Activated CD4-positive, alpha-beta T cell treated with anti-CD3 and anti-CD28 coated beads, Interleukin-2, amount 10 ng/mL, durations not matched to agents 24 days and 14 days (primary cell): ENCODE measurements at regions of chr2 and their contacts with region 1.

Region 1: DNA sequence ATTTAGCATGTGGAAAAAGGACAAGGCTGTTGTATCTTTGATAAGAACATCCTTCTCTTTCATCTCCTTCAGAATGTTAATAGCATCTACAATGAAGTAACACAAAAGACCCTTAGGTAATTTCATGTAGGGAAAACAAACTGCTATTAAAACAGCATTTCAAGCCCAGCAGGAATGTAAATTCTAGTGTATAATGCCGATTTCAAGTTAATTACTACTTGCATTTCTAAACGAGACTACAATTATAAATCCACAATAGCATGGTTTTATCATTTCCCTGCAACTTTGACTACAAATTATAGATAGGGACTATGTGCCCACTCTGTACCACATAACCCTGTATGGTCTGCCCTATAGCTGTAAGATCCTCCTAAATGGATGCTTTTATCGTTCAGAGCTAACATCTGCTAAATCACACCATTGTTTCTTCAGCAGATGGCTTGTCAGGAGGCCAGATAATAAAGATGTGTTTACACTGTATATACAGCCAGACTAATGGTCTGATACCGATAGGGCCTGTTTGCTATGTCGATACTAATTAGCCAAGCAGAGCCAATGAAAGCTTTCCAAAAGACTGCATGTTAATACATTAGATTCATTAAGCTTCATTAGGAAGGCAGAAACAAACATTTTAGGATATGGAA is 51.9 kb downstream of the LRPPRC start:
- DNase-seq: no peak
- H3K4me3 Mint-ChIP-seq: no peak overlapping the region
- H3K27ac Mint-ChIP-seq: no peak overlapping the region
- H3K4me1 Mint-ChIP-seq: no peaks in the 10 kb centered on the region
- H3K27me3 Mint-ChIP-seq: no peaks in the 10 kb centered on the region

Region 2: DNA sequence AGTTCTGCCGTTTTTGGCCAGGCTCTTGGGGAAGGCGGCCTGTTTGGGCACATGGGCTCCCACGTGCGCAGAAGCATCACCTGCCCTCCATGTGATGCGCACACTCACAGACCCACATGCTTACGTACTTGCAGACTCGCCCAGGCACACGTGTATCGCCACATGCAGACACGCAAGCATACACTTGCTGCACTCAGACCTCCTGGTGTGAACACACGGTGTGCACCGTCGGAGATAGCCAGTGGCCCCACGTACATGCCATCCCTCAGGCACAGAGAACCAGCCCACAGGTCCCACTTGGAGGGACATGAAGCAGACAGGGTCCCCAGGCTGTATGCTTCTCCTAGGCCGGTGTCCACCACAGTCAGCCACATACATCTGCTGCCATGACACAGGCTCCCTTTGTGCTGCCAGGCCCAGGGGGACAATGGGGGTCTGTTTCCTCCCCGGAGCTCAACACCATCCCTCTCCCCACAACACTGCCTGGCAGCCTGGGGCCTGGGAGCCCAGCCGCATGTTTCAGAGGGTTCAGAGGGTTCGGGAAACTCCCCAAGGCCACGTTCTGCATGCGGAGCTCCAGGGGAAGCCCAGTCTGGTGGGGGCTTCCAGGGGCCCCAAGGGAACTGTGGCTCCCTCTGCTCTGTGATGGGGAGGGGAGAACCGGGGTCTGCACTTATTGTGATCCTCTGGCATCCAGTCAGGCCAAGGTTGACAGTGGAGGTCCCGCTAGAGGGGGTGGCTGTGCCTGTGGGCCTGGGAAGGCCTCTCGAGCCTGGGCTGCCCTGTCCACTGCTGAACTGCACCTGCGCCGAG is 943.5 kb before region 1 on chr2:
- intact Hi-C with region 1: no loop called
- DNase-seq: no peak
- H3K4me3 Mint-ChIP-seq: no peak overlapping the region
- H3K27ac Mint-ChIP-seq: no peak overlapping the region
- H3K4me1 Mint-ChIP-seq: no peaks in the 10 kb centered on the region
- H3K27me3 Mint-ChIP-seq: peaks cover 15% of the 10 kb centered on the region

Region 3: GRCh38 chr2:43898134-43898837 is 45.6 kb before region 1 on chr2:
- intact Hi-C with region 1: loop called (anchors 5 kb)
- DNase-seq: peak; percentile 55
- H3K4me3 Mint-ChIP-seq: no peak overlapping the region
- H3K27ac Mint-ChIP-seq: no peak overlapping the region
- H3K4me1 Mint-ChIP-seq: no peaks in the 10 kb centered on the region
- H3K27me3 Mint-ChIP-seq: no peaks in the 10 kb centered on the region

Region 4: GRCh38 chr2:43977677-43978375 is 33.9 kb after region 1 on chr2:
- intact Hi-C with region 1: loop called (anchors 5 kb)
- DNase-seq: no peak
- H3K4me3 Mint-ChIP-seq: no peak overlapping the region
- H3K27ac Mint-ChIP-seq: no peak overlapping the region
- H3K4me1 Mint-ChIP-seq: peaks cover 2% of the 10 kb centered on the region
- H3K27me3 Mint-ChIP-seq: no peaks in the 10 kb centered on the region